ENCODE measurements at regions of chr3 and their contacts with region 1.

Region 1: GRCh38 chr3:181790561-181790960 is 78.8 kb downstream of the SOX2 start:
- DNase-seq: peak; percentile 49
- H3K4me3 ChIP-seq: no peak overlapping the region
- CTCF ChIP-seq: no peak

Region 2: DNA sequence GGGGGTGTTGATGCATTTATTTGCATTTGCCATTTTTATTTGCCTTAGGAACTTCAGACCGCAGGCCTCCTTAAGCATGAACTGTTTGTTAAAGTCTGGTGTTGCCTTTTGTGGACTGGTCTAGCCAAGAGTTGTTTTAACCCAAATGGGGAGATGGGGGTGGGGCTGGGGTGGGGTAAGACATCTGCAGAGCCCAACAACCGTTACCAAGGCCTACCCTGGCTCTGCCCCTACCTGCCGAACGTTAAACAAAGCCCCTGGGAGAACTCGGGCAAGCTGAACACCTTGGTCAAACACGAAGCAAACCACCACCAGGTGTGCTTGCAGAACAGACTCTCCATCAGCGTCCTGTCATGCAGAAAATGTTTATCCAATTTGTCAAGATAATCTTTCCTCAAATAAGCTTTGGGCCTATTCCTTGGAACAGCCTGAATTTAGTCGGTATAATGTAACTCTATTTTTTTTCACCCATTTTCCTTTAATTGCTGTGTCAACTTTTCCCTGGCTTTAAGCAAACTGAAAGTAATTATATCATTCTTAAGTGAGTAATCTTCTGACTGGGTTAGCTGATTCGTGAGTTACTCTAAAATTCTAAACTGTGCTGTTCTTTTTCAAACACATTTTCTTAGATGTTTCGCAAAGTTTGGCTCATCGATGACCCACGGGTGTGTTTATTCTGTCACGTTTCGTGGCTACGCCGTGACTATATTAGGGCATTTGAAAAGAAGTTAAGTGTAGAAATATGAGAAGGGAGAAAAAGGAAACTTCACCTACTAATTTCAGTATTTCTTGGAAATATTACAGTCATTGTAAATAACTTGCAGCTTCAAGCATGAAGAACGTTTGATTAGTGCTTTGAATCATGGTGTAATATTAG is 48.7 kb after region 1 on chr3:
- in situ Hi-C with region 1: no loop called
- DNase-seq: no peak
- H3K4me3 ChIP-seq: no peak overlapping the region
- CTCF ChIP-seq: no peak

Region 3: GRCh38 chr3:181851059-181851458 is 60.5 kb after region 1 on chr3:
- in situ Hi-C with region 1: loop called (anchors 10 kb)
- DNase-seq: no peak
- H3K4me3 ChIP-seq: no peak overlapping the region
- CTCF ChIP-seq: no peak